ENCODE measurements at regions of chr5 and their contacts with region 1.

Region 1: DNA sequence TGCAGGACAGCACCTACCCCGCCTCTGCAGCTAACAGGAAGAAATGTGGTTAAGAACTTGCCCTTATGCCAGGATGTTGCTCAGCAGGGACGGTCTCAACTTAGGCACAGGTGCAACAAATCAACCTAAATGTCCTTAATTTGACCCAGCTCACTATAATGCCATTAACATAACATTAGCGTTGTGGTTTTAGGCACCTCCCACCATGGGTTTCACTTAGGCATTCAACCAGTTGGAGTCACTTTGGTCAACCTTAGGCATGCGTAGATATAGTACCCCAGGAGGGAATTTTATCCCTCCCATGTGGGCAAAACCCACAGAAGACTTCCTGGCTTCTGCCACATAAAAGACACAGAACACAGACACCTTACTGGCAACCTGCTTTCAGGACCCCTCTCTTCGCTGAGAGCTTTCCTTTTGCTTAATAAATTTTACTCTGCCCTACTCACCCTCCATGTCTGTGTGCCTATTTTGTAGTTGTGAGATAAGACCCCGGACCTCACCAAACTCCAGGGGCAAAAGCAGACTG is 8.7 kb upstream of the ERAP1 start:
- DNase-seq: peak; percentile 70
- H3K4me3 Mint-ChIP-seq: peak overlapping the region; percentile 78
- H3K27ac Mint-ChIP-seq: peak overlapping the region; percentile 93
- H3K4me1 Mint-ChIP-seq: peaks cover 64% of the 10 kb centered on the region
- H3K27me3 Mint-ChIP-seq: no peaks in the 10 kb centered on the region

Region 2: DNA sequence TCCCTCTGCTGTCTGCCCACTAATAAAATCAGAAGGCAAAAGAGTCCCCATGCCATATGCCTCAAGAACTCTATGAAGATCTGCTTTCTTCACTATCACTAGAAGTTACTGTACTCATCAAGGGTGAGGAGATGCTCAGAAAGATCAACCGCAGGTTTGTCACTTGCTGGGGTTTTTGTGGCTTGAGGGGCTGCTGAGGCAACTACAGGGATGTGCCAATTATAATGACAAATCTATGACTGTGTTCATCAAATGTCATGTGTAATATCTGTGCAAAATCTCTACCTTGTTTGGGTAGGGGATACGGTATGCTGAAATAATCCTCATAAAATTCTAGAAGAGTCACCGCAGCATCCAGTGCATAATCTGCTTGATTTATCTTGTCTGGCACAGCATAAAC is 21.7 kb before region 1 on chr5:
- CTCF ChIA-PET with region 1: no interaction called
- POLR2A ChIA-PET with region 1: no interaction called
- intact Hi-C with region 1: loop called (anchors 1 kb)
- DNase-seq: peak; percentile 78
- H3K4me3 Mint-ChIP-seq: no peak overlapping the region
- H3K27ac Mint-ChIP-seq: peak overlapping the region; percentile 7
- H3K4me1 Mint-ChIP-seq: peaks cover 35% of the 10 kb centered on the region
- H3K27me3 Mint-ChIP-seq: no peaks in the 10 kb centered on the region